ENCODE measurements at regions of chr20 and their contacts with region 1.

Region 1: GRCh38 chr20:57383447-57384347 is 7.5 kb upstream of the RBM38 start:
- DNase-seq: peak in 7 of 42 donors; percentile 8 to 45 (median 28)

Region 2: GRCh38 chr20:57495985-57496384 is 112.3 kb after region 1 on chr20:
- intact Hi-C with region 1: loop called (anchors 1 kb)
- DNase-seq: peak in 1 of 42 donors; percentile 15